Endothelial cell of umbilical vein (primary cell): ENCODE measurements at regions of chr1 and their contacts with region 1.

Region 1: GRCh38 chr1:198771563-198772153 is 132.8 kb downstream of the PTPRC start:
- DNase-seq: peak; percentile 82
- H3K4me3 ChIP-seq: no peak overlapping the region
- H3K27ac ChIP-seq: no peak overlapping the region
- H3K4me1 ChIP-seq: peaks cover 11% of the 10 kb centered on the region
- H3K27me3 ChIP-seq: no peaks in the 10 kb centered on the region
- CTCF ChIP-seq: peak; percentile 45 to 46
- POLR2A ChIP-seq: no peak

Region 2: GRCh38 chr1:198788561-198789064 is 17.0 kb after region 1 on chr1:
- CTCF ChIA-PET with region 1: interaction called, 10 read pairs
- POLR2A ChIA-PET with region 1: interaction called, 4 read pairs
- dilution Hi-C with region 1: no loop called
- intact Hi-C with region 1: loop called (anchors 1 kb)
- DNase-seq: peak; percentile 66
- H3K4me3 ChIP-seq: no peak overlapping the region
- H3K27ac ChIP-seq: peak overlapping the region; percentile 16
- H3K4me1 ChIP-seq: no peaks in the 10 kb centered on the region
- H3K27me3 ChIP-seq: no peaks in the 10 kb centered on the region
- CTCF ChIP-seq: peak in 1 of 2 donors; percentile 27
- POLR2A ChIP-seq: no peak

Region 3: DNA sequence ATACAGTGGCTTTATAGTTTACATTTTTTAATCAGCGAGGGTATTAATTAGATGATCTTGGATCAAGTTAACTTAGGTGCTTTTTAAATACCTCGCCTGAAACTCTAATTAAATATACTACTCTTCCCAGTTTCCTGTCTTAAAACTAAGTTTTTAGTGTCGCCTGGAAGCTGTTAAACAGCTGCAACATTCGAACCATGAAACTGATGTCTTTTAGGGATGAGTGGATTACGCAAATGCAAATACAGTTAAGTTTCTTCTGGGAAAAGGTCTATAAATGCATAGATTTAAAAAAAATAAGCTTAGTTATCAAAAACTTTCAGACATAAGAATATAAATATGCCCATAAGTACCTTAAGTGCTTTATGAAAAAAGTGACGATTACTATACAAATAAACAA is 95.5 kb after region 1 on chr1:
- CTCF ChIA-PET with region 1: no interaction called
- POLR2A ChIA-PET with region 1: no interaction called
- dilution Hi-C with region 1: no loop called
- intact Hi-C with region 1: loop called (anchors 5 kb)
- DNase-seq: no peak
- H3K4me3 ChIP-seq: no peak overlapping the region
- H3K27ac ChIP-seq: no peak overlapping the region
- H3K4me1 ChIP-seq: peaks cover 9% of the 10 kb centered on the region
- H3K27me3 ChIP-seq: no peaks in the 10 kb centered on the region
- CTCF ChIP-seq: no peak
- POLR2A ChIP-seq: no peak

Region 4: GRCh38 chr1:199113265-199113869 is 341.7 kb after region 1 on chr1:
- CTCF ChIA-PET with region 1: interaction called, 21 read pairs
- POLR2A ChIA-PET with region 1: no interaction called
- dilution Hi-C with region 1: no loop called
- intact Hi-C with region 1: loop called (anchors 1 kb)
- DNase-seq: peak; percentile 85
- H3K4me3 ChIP-seq: no peak overlapping the region
- H3K27ac ChIP-seq: no peak overlapping the region
- H3K4me1 ChIP-seq: no peaks in the 10 kb centered on the region
- H3K27me3 ChIP-seq: no peaks in the 10 kb centered on the region
- CTCF ChIP-seq: peak; percentile 81 to 83
- POLR2A ChIP-seq: no peak

Region 5: GRCh38 chr1:199272643-199273086 is 501.0 kb after region 1 on chr1:
- CTCF ChIA-PET with region 1: no interaction called
- POLR2A ChIA-PET with region 1: no interaction called
- dilution Hi-C with region 1: no loop called
- intact Hi-C with region 1: loop called (anchors 1 kb)
- DNase-seq: peak; percentile 97
- H3K4me3 ChIP-seq: no peak overlapping the region
- H3K27ac ChIP-seq: peak overlapping the region; percentile 97
- H3K4me1 ChIP-seq: peaks cover 25% of the 10 kb centered on the region
- H3K27me3 ChIP-seq: no peaks in the 10 kb centered on the region
- CTCF ChIP-seq: no peak
- POLR2A ChIP-seq: peak; percentile 49

Region 6: DNA sequence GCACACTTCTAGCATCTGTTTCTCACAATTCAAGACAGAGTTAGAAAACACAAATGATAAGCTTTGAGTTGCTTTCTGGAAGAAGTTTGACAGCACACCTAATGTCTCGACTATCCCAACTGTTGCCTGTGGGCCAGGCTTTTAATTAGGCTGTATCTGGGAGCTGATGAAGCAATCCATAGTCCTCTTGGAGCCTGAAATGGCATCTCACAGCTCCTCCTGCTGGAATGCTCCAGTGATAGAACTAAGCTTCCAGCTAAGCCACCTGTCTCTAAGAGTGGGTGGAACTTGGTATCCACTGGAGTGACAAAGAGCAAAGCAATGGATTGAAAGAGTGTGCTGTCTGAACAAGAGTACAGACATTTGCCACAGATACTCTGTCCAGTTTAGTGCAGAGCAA is 650.5 kb after region 1 on chr1:
- CTCF ChIA-PET with region 1: interaction called, 15 read pairs
- POLR2A ChIA-PET with region 1: no interaction called
- dilution Hi-C with region 1: no loop called
- intact Hi-C with region 1: loop called (anchors 1 kb)
- DNase-seq: peak; percentile 53
- H3K4me3 ChIP-seq: no peak overlapping the region
- H3K27ac ChIP-seq: no peak overlapping the region
- H3K4me1 ChIP-seq: no peaks in the 10 kb centered on the region
- H3K27me3 ChIP-seq: no peaks in the 10 kb centered on the region
- CTCF ChIP-seq: peak in 1 of 2 donors; percentile 47
- POLR2A ChIP-seq: no peak

Region 7: GRCh38 chr1:199551967-199552565 is 780.4 kb after region 1 on chr1:
- CTCF ChIA-PET with region 1: no interaction called
- POLR2A ChIA-PET with region 1: no interaction called
- dilution Hi-C with region 1: no loop called
- intact Hi-C with region 1: loop called (anchors 1 kb)
- DNase-seq: peak; percentile 77
- H3K4me3 ChIP-seq: no peak overlapping the region
- H3K27ac ChIP-seq: no peak overlapping the region
- H3K4me1 ChIP-seq: no peaks in the 10 kb centered on the region
- H3K27me3 ChIP-seq: no peaks in the 10 kb centered on the region
- CTCF ChIP-seq: peak; percentile 46 to 65
- POLR2A ChIP-seq: no peak